Naive thymus-derived CD4-positive, alpha-beta T cell (primary cell): ENCODE measurements at regions of chr9 and their contacts with region 1.

Region 1: GRCh38 chr9:96009690-96010472 is 134.4 kb downstream of the ERCC6L2 start:
- DNase-seq: peak in 5 of 9 donors; percentile 44 to 68 (median 62)
- ATAC-seq: peak; percentile 83
- H3K4me3 ChIP-seq: no peak overlapping the region
- H3K4me3 Mint-ChIP-seq: peak overlapping the region; percentile 25 to 75 (median 56)
- H3K27ac ChIP-seq: peak overlapping the region; percentile 68
- H3K27ac Mint-ChIP-seq: peak overlapping the region in 8 of 9 donors; percentile 65 to 98 (median 92)
- H3K4me1 ChIP-seq: peaks cover 43 to 57% of the 10 kb centered on the region in 2 donors
- H3K4me1 Mint-ChIP-seq: peaks cover 0 to 55% (median 24%) of the 10 kb centered on the region in 7 donors
- H3K27me3 ChIP-seq: no peaks in the 10 kb centered on the region
- H3K27me3 Mint-ChIP-seq: no peaks in the 10 kb centered on the region

Region 2: DNA sequence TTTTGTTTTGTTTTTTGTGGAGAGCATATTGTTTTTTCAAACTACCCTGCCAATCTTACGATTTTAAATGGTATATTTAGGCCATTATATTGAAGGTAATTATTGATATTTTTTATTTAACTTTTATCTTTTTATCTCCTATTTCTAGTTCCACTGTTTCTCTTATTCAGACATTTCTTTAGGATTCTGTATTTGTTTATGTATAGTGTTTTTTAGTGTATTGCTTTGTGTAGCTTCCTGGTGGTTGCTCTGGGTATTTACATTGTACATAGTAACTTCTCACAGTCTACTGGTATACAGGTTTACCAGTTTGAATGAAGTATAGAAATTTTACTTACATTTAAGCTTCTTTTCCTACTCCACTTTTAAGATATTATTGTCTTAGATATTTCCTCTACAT is 71.2 kb before region 1 on chr9:
- CTCF ChIA-PET with region 1: no interaction called
- POLR2A ChIA-PET with region 1: no interaction called
- intact Hi-C with region 1: no loop called
- DNase-seq: no peak
- ATAC-seq: no peak
- H3K4me3 ChIP-seq: no peak overlapping the region
- H3K4me3 Mint-ChIP-seq: no peak overlapping the region
- H3K27ac ChIP-seq: no peak overlapping the region
- H3K27ac Mint-ChIP-seq: no peak overlapping the region
- H3K4me1 ChIP-seq: no peaks in the 10 kb centered on the region
- H3K4me1 Mint-ChIP-seq: peaks cover 0 to 4% (median 0%) of the 10 kb centered on the region in 7 donors
- H3K27me3 ChIP-seq: no peaks in the 10 kb centered on the region
- H3K27me3 Mint-ChIP-seq: no peaks in the 10 kb centered on the region

Region 3: GRCh38 chr9:95981761-95982390 is 28.0 kb before region 1 on chr9:
- CTCF ChIA-PET with region 1: interaction called, 3 read pairs
- POLR2A ChIA-PET with region 1: no interaction called
- intact Hi-C with region 1: loop called in 1 of 2 experiments (anchors 2 kb)
- DNase-seq: peak in 7 of 9 donors; percentile 42 to 76 (median 52)
- ATAC-seq: peak; percentile 94
- H3K4me3 ChIP-seq: no peak overlapping the region
- H3K4me3 Mint-ChIP-seq: peak overlapping the region in 8 of 10 donors; percentile 8 to 68 (median 41)
- H3K27ac ChIP-seq: no peak overlapping the region
- H3K27ac Mint-ChIP-seq: peak overlapping the region; percentile 4 to 84 (median 66)
- H3K4me1 ChIP-seq: peaks cover 0 to 11% of the 10 kb centered on the region in 2 donors
- H3K4me1 Mint-ChIP-seq: peaks cover 14 to 38% (median 25%) of the 10 kb centered on the region in 7 donors
- H3K27me3 ChIP-seq: no peaks in the 10 kb centered on the region
- H3K27me3 Mint-ChIP-seq: no peaks in the 10 kb centered on the region